CD8-positive, alpha-beta memory T cell (primary cell): ENCODE measurements at regions of chr20 and their contacts with region 1.

Region 1: GRCh38 chr20:23441850-23442313 is 2.4 kb downstream of the CSTL1 start:
- DNase-seq: peak; percentile 41 to 73 (median 47)
- H3K4me3 ChIP-seq: no peak overlapping the region
- H3K4me3 Mint-ChIP-seq: no peak overlapping the region
- H3K27ac ChIP-seq: no peak overlapping the region
- H3K27ac Mint-ChIP-seq: no peak overlapping the region
- H3K4me1 ChIP-seq: no peaks in the 10 kb centered on the region
- H3K4me1 Mint-ChIP-seq: peaks cover 0 to 4% (median 0%) of the 10 kb centered on the region in 3 donors
- H3K27me3 ChIP-seq: no peaks in the 10 kb centered on the region
- H3K27me3 Mint-ChIP-seq: peaks cover 0 to 2% of the 10 kb centered on the region in 2 donors

Region 2: DNA sequence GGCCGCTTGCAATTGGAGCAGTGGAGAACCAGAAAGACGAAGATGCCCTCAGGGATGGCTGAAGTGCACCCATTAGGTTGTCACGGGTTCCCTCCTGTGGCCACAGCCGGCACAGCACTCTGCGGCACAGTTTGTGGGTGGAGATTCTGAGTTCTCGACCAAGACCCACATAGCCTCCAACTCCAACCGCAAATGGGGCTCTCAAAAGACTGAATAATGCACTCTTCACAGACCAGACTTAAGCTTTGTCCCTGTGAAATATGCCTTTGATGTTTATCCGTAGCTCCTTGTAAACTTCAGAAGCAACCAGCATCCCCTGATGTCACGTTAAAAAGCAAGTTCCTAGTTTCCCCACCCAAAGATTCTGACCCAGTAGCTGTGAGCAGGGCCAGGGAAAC is 164.8 kb after region 1 on chr20:
- CTCF ChIA-PET with region 1: interaction called, 22 read pairs
- POLR2A ChIA-PET with region 1: no interaction called
- DNase-seq: peak; percentile 37 to 71 (median 44)
- H3K4me3 ChIP-seq: no peak overlapping the region
- H3K4me3 Mint-ChIP-seq: no peak overlapping the region
- H3K27ac ChIP-seq: no peak overlapping the region
- H3K27ac Mint-ChIP-seq: peak overlapping the region in 1 of 8 donors; percentile 64
- H3K4me1 ChIP-seq: no peaks in the 10 kb centered on the region
- H3K4me1 Mint-ChIP-seq: peaks cover 0 to 5% (median 4%) of the 10 kb centered on the region in 3 donors
- H3K27me3 ChIP-seq: no peaks in the 10 kb centered on the region
- H3K27me3 Mint-ChIP-seq: peaks cover 4 to 7% of the 10 kb centered on the region in 2 donors